ENCODE measurements at regions of chr1 and their contacts with region 1.

Region 1: GRCh38 chr1:173243300-173243699 is 36.2 kb upstream of the TNFSF4 start:
- DNase-seq: no peak
- H3K4me3 ChIP-seq: no peak overlapping the region
- H3K27me3 ChIP-seq: no peaks in the 10 kb centered on the region
- CTCF ChIP-seq: no peak

Region 2: DNA sequence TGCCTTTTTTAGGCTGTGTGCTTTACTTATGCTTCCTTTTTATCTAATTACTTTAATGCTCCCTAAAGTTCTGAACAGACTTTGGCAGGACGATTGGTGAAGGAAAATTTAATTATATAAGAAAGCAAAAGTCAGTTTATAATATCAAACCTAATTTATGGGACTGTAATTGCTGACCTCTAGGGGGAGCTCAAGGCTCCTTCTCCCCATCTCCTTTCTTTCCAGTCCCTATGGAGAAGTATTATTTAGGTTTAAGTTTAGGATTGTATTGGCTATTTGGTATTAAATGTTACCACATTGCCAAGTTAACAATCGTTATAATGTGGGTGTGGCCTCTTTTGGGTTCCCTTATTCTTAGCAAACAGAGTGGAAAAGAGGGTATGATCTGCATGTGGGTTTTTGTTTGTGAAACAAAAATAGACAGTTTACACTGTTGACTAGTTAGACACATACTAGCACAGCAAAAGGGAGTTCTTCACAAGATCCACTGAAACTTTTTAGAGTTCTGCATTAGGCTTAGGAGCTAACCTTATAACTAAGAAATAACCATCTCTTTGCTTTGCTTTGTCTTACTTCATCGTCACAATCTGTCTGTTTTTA is 12.0 kb after region 1 on chr1:
- CTCF ChIA-PET with region 1: interaction called, 10 read pairs
- POLR2A ChIA-PET with region 1: no interaction called
- DNase-seq: no peak
- H3K4me3 ChIP-seq: no peak overlapping the region
- H3K27me3 ChIP-seq: no peaks in the 10 kb centered on the region
- CTCF ChIP-seq: peak; percentile 79